H1 (cell line): ENCODE measurements at regions of chr13 and their contacts with region 1.

Region 1: GRCh38 chr13:27953676-27954405 is 15.3 kb downstream of the CDX2 start:
- DNase-seq: peak in 1 of 2 experiments; percentile 95
- H3K4me3 ChIP-seq: peak overlapping the region; percentile 5 to 61 (median 42)
- H3K27ac ChIP-seq: no peak overlapping the region
- H3K4me1 ChIP-seq: peaks cover 0 to 5% (median 3%) of the 10 kb centered on the region in 4 experiments; a peak in 4 of 7 replicates
- H3K27me3 ChIP-seq: peaks cover 57 to 86% (median 73%) of the 10 kb centered on the region in 4 experiments
- CTCF ChIP-seq: peak; percentile 90 to 97 (median 93)
- EP300 ChIP-seq: 0 out of 3 replicates have a peak, but pooled peaks of 1 of the 2 experiments have one; percentile 64
- POLR2A ChIP-seq: no peak
- RAD21 ChIP-seq: peak; percentile 91 to 93

Region 2: GRCh38 chr13:27765650-27766049 is 188.2 kb before region 1 on chr13:
- CTCF ChIA-PET with region 1: no interaction called
- POLR2A ChIA-PET with region 1: no interaction called
- DNase-seq: no peak
- H3K4me3 ChIP-seq: no peak overlapping the region
- H3K27ac ChIP-seq: no peak overlapping the region
- H3K4me1 ChIP-seq: no peaks in the 10 kb centered on the region
- H3K27me3 ChIP-seq: no peaks in the 10 kb centered on the region
- CTCF ChIP-seq: peak; percentile 5 to 22 (median 15); a peak in 3 of 4 replicates
- EP300 ChIP-seq: no peak
- POLR2A ChIP-seq: no peak
- RAD21 ChIP-seq: peak; percentile 2 to 14; a peak in 1 of 4 replicates

Region 3: GRCh38 chr13:27860743-27861142 is 93.1 kb before region 1 on chr13:
- CTCF ChIA-PET with region 1: interaction called, 13 read pairs
- POLR2A ChIA-PET with region 1: no interaction called
- DNase-seq: no peak
- H3K4me3 ChIP-seq: no peak overlapping the region
- H3K27ac ChIP-seq: no peak overlapping the region
- H3K4me1 ChIP-seq: peaks cover 6 to 15% (median 11%) of the 10 kb centered on the region in 4 experiments
- H3K27me3 ChIP-seq: no peaks in the 10 kb centered on the region; a peak in 1 of 7 replicates
- CTCF ChIP-seq: no peak
- EP300 ChIP-seq: no peak
- POLR2A ChIP-seq: no peak
- RAD21 ChIP-seq: no peak

Region 4: DNA sequence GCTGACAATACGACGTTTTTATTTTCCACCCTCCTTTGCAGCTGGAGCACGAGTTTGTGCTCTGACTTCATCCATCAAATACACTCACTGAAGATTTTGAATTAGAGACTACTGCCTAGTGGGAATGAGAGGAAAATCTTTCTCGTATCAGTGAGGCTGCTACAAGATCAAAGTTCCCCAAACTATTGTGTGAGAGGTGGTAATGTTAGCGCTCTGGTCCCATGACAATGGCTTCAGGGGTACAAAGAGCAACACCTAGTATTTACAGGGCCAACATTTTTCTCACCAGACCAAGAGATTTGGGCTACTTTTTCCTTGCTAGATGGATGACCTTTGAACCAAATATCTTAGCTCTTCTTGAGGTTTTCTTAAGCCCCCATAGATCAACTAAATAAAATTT is 64.4 kb before region 1 on chr13:
- CTCF ChIA-PET with region 1: no interaction called
- POLR2A ChIA-PET with region 1: no interaction called
- DNase-seq: no peak
- H3K4me3 ChIP-seq: no peak overlapping the region
- H3K27ac ChIP-seq: no peak overlapping the region
- H3K4me1 ChIP-seq: no peaks in the 10 kb centered on the region
- H3K27me3 ChIP-seq: no peaks in the 10 kb centered on the region
- CTCF ChIP-seq: no peak
- EP300 ChIP-seq: no peak
- POLR2A ChIP-seq: no peak
- RAD21 ChIP-seq: no peak

Region 5: GRCh38 chr13:27919934-27920676 is 33.7 kb before region 1 on chr13 and contains the start of gene PDX1:
- CTCF ChIA-PET with region 1: interaction called, 17 read pairs
- POLR2A ChIA-PET with region 1: interaction called, 4 read pairs
- DNase-seq: peak in 1 of 2 experiments; percentile 81
- H3K4me3 ChIP-seq: peak within 1 kb of the TSS in 2 of 4 experiments; percentile 7 to 49; a peak in 4 of 8 replicates
- H3K27ac ChIP-seq: no peak within 1 kb of the TSS
- H3K4me1 ChIP-seq: peaks cover 8 to 34% (median 22%) of the 10 kb centered on the region in 4 experiments
- H3K27me3 ChIP-seq: peaks cover 97 to 100% (median 100%) of the 10 kb centered on the region in 4 experiments
- CTCF ChIP-seq: no peak
- EP300 ChIP-seq: no peak
- POLR2A ChIP-seq: no peak
- RAD21 ChIP-seq: no peak
- total RNA-seq, gene PDX1: not detected in 2 replicates

Region 6: DNA sequence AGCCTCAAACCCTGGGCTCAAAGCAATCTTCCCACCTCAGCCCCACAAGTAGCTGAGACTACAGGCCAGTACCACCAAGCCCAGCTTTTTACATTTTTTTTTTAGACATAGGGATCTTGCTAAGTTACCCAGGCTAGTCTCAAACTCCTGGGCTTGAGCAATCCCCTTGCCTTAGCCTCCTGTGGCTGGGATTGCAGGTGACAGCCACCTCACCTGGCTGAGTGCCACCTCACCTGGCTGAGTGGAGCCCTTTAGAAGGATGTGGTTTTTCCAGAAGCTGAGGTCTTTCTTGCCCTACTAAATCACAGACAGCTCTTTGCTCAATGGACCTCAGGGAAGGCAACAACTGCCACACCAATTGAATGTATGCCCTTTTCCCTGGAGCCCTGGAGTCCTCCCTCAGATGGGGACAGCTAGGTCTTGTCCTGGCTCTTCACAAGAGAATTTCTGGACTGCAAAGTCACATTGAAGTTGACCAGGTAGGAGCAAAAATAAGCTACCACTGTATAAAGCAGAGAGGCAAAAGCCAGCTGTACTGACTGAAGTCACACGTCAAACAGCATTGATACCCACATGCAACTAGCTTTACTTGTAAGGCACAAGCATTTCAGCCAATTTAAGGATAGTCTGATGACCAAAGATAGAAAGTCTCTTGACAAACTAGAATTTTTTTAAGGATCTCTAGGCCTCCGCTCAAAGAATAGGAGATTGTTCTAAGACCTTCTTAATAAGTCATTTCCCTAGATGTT is 20.1 kb before region 1 on chr13:
- CTCF ChIA-PET with region 1: interaction called, 22 read pairs
- POLR2A ChIA-PET with region 1: interaction called, 3 read pairs
- DNase-seq: no peak
- H3K4me3 ChIP-seq: no peak overlapping the region
- H3K27ac ChIP-seq: no peak overlapping the region
- H3K4me1 ChIP-seq: peaks cover 0 to 5% (median 3%) of the 10 kb centered on the region in 4 experiments; a peak in 4 of 7 replicates
- H3K27me3 ChIP-seq: peaks cover 32 to 52% (median 45%) of the 10 kb centered on the region in 4 experiments
- CTCF ChIP-seq: no peak
- EP300 ChIP-seq: no peak
- POLR2A ChIP-seq: no peak
- RAD21 ChIP-seq: no peak

Region 7: GRCh38 chr13:28027607-28028364 is 73.9 kb after region 1 on chr13:
- CTCF ChIA-PET with region 1: no interaction called
- POLR2A ChIA-PET with region 1: no interaction called
- DNase-seq: no peak
- H3K4me3 ChIP-seq: no peak overlapping the region
- H3K27ac ChIP-seq: no peak overlapping the region
- H3K4me1 ChIP-seq: peaks cover 3 to 8% (median 4%) of the 10 kb centered on the region in 4 experiments
- H3K27me3 ChIP-seq: no peaks in the 10 kb centered on the region
- CTCF ChIP-seq: no peak
- EP300 ChIP-seq: no peak
- POLR2A ChIP-seq: no peak
- RAD21 ChIP-seq: no peak